ENCODE measurements at regions of chr9 and their contacts with region 1.

Region 1: GRCh38 chr9:75027187-75028107 is 646 bp downstream of the CARNMT1 start:
- DNase-seq: peak; percentile 52 to 65
- ATAC-seq: peak; percentile 53 to 78 (median 66)
- H3K4me3 ChIP-seq: peak overlapping the region; percentile 63 to 90 (median 80)
- H3K27ac ChIP-seq: peak overlapping the region; percentile 52 to 98 (median 92)
- H3K4me1 ChIP-seq: peaks cover 0 to 28% (median 17%) of the 10 kb centered on the region in 9 donors
- H3K27me3 ChIP-seq: no peaks in the 10 kb centered on the region
- CTCF ChIP-seq: no peak

Region 2: GRCh38 chr9:75071530-75072124 is 44.2 kb after region 1 on chr9:
- intact Hi-C with region 1: loop called in 4 of 10 experiments (anchors 2 to 10 kb)
- DNase-seq: no peak
- ATAC-seq: peak in 1 of 8 donors; percentile 15
- H3K4me3 ChIP-seq: no peak overlapping the region
- H3K27ac ChIP-seq: no peak overlapping the region
- H3K4me1 ChIP-seq: no peaks in the 10 kb centered on the region
- H3K27me3 ChIP-seq: no peaks in the 10 kb centered on the region
- CTCF ChIP-seq: no peak

Region 3: DNA sequence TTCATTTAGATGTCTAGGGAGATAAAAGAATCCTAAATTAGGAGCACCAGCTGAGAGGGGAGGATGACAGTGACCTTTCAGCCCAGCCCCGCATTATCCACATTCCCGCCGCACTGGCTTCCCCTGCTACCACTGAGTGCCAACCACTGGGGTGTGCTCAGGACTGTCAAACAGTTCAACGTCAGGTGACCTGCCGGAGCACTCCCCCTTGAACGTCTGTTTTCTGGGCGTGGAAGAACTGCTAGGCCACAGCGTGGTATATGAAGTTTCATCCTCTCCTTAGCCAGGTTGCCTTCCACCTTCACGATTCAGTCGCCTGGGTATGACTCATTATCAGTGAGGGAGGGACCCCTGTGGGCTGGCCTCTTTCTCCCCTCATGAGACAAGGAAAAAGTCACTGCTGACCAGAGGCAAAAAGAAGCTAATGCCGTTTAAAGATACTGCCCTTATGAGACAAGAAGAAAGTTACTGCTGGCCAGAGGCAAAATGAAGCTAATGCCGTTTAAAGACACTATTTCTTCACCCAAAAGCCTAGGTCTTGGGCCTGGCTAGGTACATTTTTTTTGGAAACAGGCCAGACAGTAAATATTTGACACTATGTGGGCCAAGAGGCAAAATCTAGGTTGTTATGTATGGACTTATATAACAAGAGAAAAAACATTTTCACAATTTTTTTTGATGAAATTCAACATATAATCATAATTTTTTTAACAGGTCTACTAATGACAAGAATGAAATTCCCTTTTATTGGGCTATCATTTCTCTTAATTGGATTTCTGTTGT is 55.9 kb after region 1 on chr9:
- intact Hi-C with region 1: loop called in 6 of 10 experiments (anchors 1 to 10 kb)
- DNase-seq: peak; percentile 19 to 21
- ATAC-seq: peak in 3 of 8 donors; percentile 34 to 39 (median 38)
- H3K4me3 ChIP-seq: no peak overlapping the region
- H3K27ac ChIP-seq: peak overlapping the region in 5 of 10 donors; percentile 1 to 51 (median 25)
- H3K4me1 ChIP-seq: peaks cover 0 to 42% (median 27%) of the 10 kb centered on the region in 9 donors
- H3K27me3 ChIP-seq: no peaks in the 10 kb centered on the region
- CTCF ChIP-seq: no peak